GM10248 (cell line): ENCODE measurements at regions of chr22 and their contacts with region 1.

Region 1: GRCh38 chr22:36144886-36145541 is 15.5 kb downstream of the APOL3 start:
- DNase-seq: no peak
- CTCF ChIP-seq: peak; percentile 58

Region 2: DNA sequence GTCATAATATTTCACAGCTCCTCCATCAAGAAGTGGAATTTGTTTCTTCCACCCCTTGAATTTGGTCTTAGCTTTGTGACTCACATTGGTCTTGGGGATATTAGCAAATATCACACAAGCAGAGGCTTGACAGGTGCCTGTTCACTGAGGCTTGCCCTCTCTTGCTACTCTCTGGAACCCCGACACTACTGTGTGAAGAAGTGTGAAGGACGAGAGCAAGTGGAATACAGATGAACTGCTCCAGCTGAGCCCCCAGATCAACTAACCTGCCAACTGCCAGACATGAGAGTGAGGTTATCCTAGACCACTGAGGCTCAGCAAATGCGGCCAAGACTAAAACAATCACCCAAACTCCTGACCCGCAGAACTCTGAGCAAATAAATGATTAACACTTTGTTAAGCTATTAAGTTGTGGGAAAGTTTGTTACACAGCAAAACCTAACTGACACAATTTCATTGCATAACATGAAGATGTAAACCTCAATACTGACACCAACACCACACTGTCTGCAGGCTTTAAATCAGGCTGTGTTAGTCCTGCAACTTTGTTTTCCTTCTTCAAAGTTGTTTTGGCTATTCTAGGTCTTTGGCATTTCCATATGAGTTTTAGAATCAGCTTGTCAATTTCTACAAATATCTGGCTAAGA is 284.8 kb before region 1 on chr22:
- CTCF ChIA-PET with region 1: no interaction called
- POLR2A ChIA-PET with region 1: no interaction called
- DNase-seq: no peak
- CTCF ChIP-seq: no peak

Region 3: GRCh38 chr22:36110306-36110881 is 34.6 kb before region 1 on chr22:
- CTCF ChIA-PET with region 1: no interaction called
- POLR2A ChIA-PET with region 1: no interaction called
- DNase-seq: no peak
- CTCF ChIP-seq: no peak

Region 4: DNA sequence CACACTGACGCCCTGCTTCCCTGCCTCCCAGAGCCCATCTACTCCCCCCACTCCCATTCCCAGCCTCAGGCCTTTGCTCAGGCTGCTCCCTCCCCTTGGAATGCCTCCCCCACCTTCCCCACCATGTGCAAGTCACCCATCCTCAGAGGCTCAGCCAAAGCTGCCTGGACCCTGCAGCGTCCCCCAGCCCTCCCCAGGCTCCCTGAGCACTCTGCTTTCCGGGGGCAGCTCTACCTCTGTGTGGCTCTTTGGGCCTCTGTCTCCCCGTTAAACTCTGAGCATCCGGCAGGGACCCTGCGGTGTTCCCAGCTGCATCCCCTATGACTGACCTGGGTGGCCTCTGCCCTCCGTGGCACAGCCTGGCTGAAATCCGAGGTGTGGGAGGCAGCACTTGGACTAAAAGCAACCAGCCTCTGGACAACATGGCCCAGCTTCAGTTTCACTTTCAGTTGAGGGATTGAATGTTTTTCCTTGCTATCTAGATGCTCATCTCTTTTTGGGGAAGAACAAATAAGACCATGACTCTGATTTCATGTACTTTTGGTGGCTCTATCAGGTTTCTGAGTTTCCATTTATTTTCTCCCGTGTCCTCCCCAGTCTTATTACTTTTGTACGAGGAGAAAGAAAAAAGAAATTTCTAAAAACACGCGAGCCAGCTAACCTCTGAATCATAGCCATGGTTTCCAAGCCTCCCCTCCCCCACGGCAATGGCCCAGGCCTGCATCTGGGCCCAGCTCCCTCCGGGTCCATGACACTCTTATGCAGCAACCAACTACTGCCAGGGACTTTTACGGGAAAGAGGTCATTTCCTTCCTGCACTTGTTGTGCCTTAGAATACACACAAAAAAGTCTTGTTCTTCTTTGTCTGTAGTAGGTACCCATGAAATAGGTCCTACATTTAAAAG is 11.8 kb after region 1 on chr22:
- CTCF ChIA-PET with region 1: interaction called, 29 read pairs
- POLR2A ChIA-PET with region 1: no interaction called
- DNase-seq: no peak
- CTCF ChIP-seq: no peak